HepG2 (cell line): ENCODE measurements at regions of chr1 and their contacts with region 1.

Region 1: DNA sequence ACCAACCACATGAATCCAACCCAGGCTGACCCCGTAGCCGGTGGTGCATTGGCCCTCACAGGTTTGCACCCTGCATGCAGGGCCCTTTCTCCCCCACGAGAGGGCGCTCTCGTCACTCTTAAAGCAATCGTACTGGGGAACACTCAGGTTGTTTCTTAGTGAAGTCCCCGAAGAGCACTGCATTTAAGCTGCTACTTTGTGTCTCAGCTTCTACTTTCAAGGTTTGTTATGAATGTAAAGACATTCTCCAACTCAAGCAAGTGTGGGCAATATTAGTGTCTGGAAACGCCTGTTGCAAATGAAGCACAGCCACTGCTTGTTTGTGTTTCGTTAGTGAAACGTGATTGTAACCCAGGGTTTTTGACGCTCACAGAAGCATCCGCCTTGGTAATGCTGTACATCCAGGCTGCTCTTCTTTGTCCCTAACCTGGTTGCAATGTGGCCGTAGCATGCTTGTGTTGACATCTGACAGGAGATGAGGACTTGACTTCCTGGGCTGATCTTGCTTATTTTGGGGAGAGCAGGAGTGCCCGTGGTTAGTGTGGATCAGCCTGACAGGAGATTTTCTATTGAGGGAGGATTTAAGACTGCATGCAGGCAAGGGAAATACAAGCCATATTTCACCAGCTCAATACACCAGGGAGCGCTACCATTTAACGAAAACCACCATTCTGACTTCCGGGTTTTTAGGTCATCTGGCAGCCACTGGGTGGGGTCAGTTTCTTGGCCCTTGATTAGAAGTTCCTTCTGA is 79.8 kb downstream of the ST6GALNAC3 start:
- DNase-seq: peak; percentile 59
- ATAC-seq: peak; percentile 99
- H3K4me3 ChIP-seq: peak overlapping the region in 2 of 3 experiments; percentile 35 to 51; a peak in 3 of 6 replicates
- H3K27ac ChIP-seq: no peak overlapping the region
- H3K4me1 ChIP-seq: peaks cover 10% of the 10 kb centered on the region
- H3K27me3 ChIP-seq: no peaks in the 10 kb centered on the region; a peak in 1 of 5 replicates
- CTCF ChIP-seq: peak; percentile 93
- EP300 ChIP-seq: no peak
- POLR2A ChIP-seq: no peak
- RAD21 ChIP-seq: peak; percentile 72

Region 2: DNA sequence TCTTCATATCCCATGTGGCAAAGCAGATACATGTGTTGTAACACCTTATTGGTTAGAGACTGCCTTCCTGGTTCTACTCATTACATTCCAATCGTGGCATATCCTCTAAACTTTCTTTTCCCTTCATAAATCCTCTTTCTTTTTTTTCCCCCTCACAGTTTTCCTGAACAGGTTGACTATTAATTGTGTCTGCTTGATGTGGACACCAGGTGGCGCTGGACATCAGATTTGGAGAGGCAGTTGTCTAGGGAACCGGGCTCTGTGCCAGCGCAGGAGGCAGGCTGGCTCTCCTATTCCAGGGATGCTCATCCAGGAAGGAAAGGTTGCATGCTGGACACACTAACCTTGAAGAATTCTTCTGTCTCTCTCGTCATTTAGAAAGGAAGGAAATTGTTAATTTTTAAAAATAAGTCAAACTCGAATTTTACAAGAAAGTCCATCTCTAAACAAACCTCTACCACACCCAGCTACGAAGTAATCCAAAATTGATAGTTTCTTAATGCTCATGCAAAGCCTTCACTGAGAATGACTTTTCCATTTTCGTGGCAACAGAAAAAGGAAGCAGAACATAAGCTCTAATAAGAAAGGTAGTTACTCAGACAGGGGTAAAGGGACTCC is 162.8 kb before region 1 on chr1:
- CTCF ChIA-PET with region 1: no interaction called
- POLR2A ChIA-PET with region 1: no interaction called
- in situ Hi-C with region 1: no loop called
- intact Hi-C with region 1: loop called (anchors 5 kb)
- DNase-seq: peak; percentile 81
- ATAC-seq: peak; percentile 88
- H3K4me3 ChIP-seq: no peak overlapping the region
- H3K27ac ChIP-seq: no peak overlapping the region
- H3K4me1 ChIP-seq: no peaks in the 10 kb centered on the region
- H3K27me3 ChIP-seq: no peaks in the 10 kb centered on the region
- CTCF ChIP-seq: peak; percentile 81
- EP300 ChIP-seq: no peak
- POLR2A ChIP-seq: no peak
- RAD21 ChIP-seq: peak; percentile 21; the same call in 1 of the 2 replicates

Region 3: DNA sequence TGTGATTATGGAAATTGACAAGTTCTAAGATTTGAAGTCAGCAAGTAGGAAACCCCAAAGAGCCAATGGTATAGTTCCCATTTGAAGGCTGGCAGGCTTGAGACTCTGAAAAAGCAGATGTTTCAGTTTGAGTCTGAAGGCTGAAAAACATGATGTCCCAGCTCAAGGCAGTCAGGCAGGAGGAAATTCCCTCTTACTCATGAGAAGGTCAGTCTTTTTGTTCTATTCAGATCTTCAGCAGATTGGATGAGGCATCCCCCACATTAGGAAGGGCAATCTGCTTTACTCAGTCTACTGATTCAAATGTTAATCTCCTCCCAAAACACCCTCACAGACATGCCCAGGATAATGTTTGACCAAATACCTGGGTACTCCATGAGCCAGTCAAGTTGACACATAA is 340.4 kb after region 1 on chr1:
- CTCF ChIA-PET with region 1: no interaction called
- POLR2A ChIA-PET with region 1: no interaction called
- in situ Hi-C with region 1: no loop called
- intact Hi-C with region 1: loop called (anchors 5 kb)
- DNase-seq: no peak
- ATAC-seq: no peak
- H3K4me3 ChIP-seq: no peak overlapping the region
- H3K27ac ChIP-seq: no peak overlapping the region
- H3K4me1 ChIP-seq: no peaks in the 10 kb centered on the region
- H3K27me3 ChIP-seq: 0 out of 5 replicates have a peak, but pooled peaks cover 0 to 2% of the 10 kb centered on the region in 2 experiments
- CTCF ChIP-seq: no peak
- EP300 ChIP-seq: no peak
- POLR2A ChIP-seq: no peak
- RAD21 ChIP-seq: no peak

Region 4: DNA sequence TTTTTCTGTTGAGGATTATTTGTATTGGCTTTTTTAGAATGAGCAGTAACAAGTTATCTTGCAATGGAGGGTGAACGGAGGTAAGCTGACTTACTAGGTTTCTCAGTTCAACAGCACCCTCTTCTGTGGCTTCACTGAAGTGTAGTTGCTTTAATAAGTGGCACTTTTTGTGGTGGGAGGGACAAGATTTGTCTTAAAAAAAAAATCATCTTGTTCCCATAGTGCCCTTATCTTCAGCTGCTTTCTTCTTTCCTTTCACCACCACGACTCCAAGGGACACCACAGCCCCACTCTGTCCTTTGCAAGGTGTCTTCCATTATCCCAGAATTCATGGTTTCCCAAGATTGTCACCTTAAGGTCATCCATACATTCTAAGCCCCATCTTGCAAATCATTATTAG is 971.9 kb after region 1 on chr1:
- CTCF ChIA-PET with region 1: interaction called, 3 read pairs
- POLR2A ChIA-PET with region 1: no interaction called
- in situ Hi-C with region 1: no loop called
- intact Hi-C with region 1: loop called (anchors 1 kb)
- DNase-seq: peak; percentile 39
- ATAC-seq: peak; percentile 68
- H3K4me3 ChIP-seq: no peak overlapping the region
- H3K27ac ChIP-seq: no peak overlapping the region
- H3K4me1 ChIP-seq: no peaks in the 10 kb centered on the region
- H3K27me3 ChIP-seq: no peaks in the 10 kb centered on the region
- CTCF ChIP-seq: peak; percentile 68
- EP300 ChIP-seq: no peak
- POLR2A ChIP-seq: no peak
- RAD21 ChIP-seq: peak; percentile 34; the same call in 1 of the 2 replicates

Region 5: GRCh38 chr1:77313491-77313890 is 1159.1 kb after region 1 on chr1:
- CTCF ChIA-PET with region 1: no interaction called
- POLR2A ChIA-PET with region 1: no interaction called
- in situ Hi-C with region 1: no loop called
- intact Hi-C with region 1: loop called (anchors 2 kb)
- DNase-seq: peak; percentile 40
- ATAC-seq: peak; percentile 100
- H3K4me3 ChIP-seq: no peak overlapping the region
- H3K27ac ChIP-seq: no peak overlapping the region
- H3K4me1 ChIP-seq: no peaks in the 10 kb centered on the region
- H3K27me3 ChIP-seq: no peaks in the 10 kb centered on the region; a peak in 2 of 5 replicates
- CTCF ChIP-seq: peak; percentile 54
- EP300 ChIP-seq: no peak
- POLR2A ChIP-seq: no peak
- RAD21 ChIP-seq: no peak